ENCODE measurements at regions of chr1 and their contacts with region 1.

Region 1: DNA sequence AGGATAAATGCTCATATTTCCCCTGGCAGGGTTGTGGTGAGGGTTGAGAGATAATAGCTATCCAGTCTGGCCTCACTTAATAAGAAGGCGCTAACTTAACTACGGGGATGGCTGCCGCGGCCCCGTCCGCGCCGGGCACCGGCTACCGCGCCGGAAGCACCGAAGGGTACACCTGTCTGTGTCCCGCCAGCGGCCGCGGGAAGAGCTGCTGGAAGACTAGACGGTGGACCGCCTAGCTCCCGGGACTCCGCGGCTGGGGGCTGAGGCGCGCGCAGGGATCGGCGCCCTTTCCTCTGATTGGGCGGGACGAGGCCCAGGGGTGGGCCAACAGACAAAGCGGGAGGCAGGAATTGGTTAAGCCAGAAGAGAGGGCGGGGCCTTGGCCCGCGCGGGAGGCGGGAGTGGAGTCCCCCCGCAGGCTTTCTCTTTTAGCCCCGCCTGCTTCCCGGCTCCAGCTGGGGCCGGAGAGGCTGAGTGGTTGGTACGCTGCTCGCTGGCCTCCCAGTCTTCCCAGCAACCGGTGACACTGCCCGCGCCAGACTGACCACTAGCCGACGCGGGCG is at the start of gene ZNF672:
- DNase-seq: peak; percentile 94
- ATAC-seq: peak; percentile 82
- H3K4me3 ChIP-seq: peak within 1 kb of the TSS; percentile 65 to 94 (median 92)
- H3K4me3 Mint-ChIP-seq: no peak within 1 kb of the TSS
- H3K27ac ChIP-seq: peak within 1 kb of the TSS; percentile 97 to 99
- H3K27ac Mint-ChIP-seq: no peak within 1 kb of the TSS
- H3K4me1 ChIP-seq: peaks cover 42 to 47% of the 10 kb centered on the region in 2 donors
- H3K4me1 Mint-ChIP-seq: peaks cover 36% of the 10 kb centered on the region
- H3K27me3 ChIP-seq: no peaks in the 10 kb centered on the region
- H3K27me3 Mint-ChIP-seq: no peaks in the 10 kb centered on the region
- CTCF ChIP-seq: no peak
- total RNA-seq, gene ZNF672: 56.3 and 62.2 TPM in 2 replicates

Region 2: GRCh38 chr1:248786156-248786555 is 51.7 kb before region 1 on chr1:
- CTCF ChIA-PET with region 1: no interaction called
- POLR2A ChIA-PET with region 1: no interaction called
- intact Hi-C with region 1: no loop called
- DNase-seq: no peak
- ATAC-seq: peak; percentile 31
- H3K4me3 ChIP-seq: no peak overlapping the region
- H3K4me3 Mint-ChIP-seq: peak overlapping the region; percentile 26
- H3K27ac ChIP-seq: peak overlapping the region in 1 of 2 donors; percentile 55
- H3K27ac Mint-ChIP-seq: peak overlapping the region; percentile 72
- H3K4me1 ChIP-seq: peaks cover 43 to 46% of the 10 kb centered on the region in 2 donors
- H3K4me1 Mint-ChIP-seq: peaks cover 40% of the 10 kb centered on the region
- H3K27me3 ChIP-seq: no peaks in the 10 kb centered on the region
- H3K27me3 Mint-ChIP-seq: no peaks in the 10 kb centered on the region
- CTCF ChIP-seq: no peak

Region 3: GRCh38 chr1:248815407-248816015 is 22.4 kb before region 1 on chr1:
- CTCF ChIA-PET with region 1: no interaction called
- POLR2A ChIA-PET with region 1: no interaction called
- intact Hi-C with region 1: no loop called
- DNase-seq: no peak
- ATAC-seq: no peak
- H3K4me3 ChIP-seq: no peak overlapping the region
- H3K4me3 Mint-ChIP-seq: no peak overlapping the region
- H3K27ac ChIP-seq: no peak overlapping the region
- H3K27ac Mint-ChIP-seq: no peak overlapping the region
- H3K4me1 ChIP-seq: peaks cover 48 to 53% of the 10 kb centered on the region in 2 donors
- H3K4me1 Mint-ChIP-seq: peaks cover 42% of the 10 kb centered on the region
- H3K27me3 ChIP-seq: no peaks in the 10 kb centered on the region
- H3K27me3 Mint-ChIP-seq: no peaks in the 10 kb centered on the region
- CTCF ChIP-seq: no peak

Region 4: DNA sequence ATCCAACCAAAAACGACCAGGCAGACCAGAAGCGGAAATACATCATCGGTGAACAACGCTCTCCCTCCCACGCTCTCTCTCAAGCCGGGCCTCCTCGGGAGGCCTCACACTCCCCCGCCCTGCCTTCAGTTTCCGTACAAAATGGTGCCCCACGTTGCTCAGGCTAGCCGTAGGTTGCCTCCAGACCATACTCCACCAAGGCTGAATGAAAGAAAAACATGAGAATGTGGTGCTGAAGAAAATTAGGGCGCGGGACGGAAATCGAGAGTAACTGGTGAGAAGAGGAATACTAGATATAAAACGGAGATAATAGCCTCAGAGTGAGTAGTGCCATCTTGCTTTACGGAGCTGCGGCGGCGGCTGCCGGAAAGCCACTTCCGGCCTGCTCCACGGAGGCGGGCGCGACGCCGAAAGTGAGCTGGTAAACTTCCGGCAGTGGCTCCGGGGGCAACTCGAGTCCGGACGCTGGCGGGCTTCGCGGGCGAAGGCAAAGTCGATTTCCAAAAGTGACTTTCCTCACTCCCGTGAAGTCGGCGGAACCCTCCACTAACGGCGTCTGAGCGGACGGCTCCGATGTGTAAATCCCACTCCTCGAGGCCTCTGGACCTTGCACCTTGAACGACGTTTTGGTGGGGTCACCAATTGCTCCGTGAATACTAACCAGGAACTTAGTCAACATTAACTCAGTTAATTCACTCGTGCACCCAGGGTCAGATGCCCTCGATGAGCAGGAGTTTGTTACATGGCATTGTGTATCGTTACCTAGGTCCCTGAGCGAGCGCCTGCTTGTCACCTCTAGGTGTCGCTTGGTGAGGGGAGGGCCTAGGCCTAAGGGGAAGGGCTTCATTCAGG is 11.7 kb before region 1 on chr1 and contains the start of gene SH3BP5L:
- CTCF ChIA-PET with region 1: interaction called, 43 read pairs
- POLR2A ChIA-PET with region 1: interaction called, 51 read pairs
- intact Hi-C with region 1: loop called (anchors 1 kb)
- DNase-seq: peak; percentile 98
- ATAC-seq: peak; percentile 84
- H3K4me3 ChIP-seq: peak within 1 kb of the TSS; percentile 86 to 99 (median 93)
- H3K4me3 Mint-ChIP-seq: peak within 1 kb of the TSS; percentile 95
- H3K27ac ChIP-seq: peak within 1 kb of the TSS; percentile 98
- H3K27ac Mint-ChIP-seq: peak within 1 kb of the TSS; percentile 96
- H3K4me1 ChIP-seq: peaks cover 52 to 54% of the 10 kb centered on the region in 2 donors
- H3K4me1 Mint-ChIP-seq: peaks cover 57% of the 10 kb centered on the region
- H3K27me3 ChIP-seq: no peaks in the 10 kb centered on the region
- H3K27me3 Mint-ChIP-seq: no peaks in the 10 kb centered on the region
- CTCF ChIP-seq: peak; percentile 84
- total RNA-seq, gene SH3BP5L: 35.7 and 36.5 TPM in 2 replicates

Region 5: DNA sequence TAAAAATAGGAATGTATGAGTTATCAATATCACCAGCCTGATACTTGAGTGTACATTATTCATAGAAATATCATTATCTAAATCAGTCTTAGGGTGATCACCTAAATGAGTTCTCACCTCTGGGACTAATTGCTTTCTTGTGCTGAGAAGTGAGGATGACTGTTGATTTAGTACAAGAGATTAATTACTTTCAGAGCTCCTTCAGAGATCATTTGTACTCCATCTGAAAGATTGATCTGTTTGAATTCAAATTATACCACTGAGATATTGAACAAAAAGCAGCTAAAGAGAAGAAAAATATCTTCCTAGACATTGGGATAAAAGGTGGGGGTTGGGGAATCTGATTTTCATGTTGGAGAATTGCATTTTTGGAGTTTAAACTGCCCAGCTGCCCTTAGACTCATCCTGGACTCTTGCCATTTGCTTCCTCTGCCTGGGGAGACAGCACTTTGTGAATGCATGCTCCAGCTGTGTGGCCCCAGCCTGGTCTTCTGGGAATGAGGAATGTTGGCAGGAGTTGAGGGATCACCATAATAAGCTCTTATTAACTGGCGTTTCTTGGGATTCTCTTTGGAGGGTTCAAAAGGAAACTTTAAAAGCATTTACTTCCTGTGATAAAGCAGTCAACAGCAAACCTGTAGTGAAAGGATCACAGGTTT is 48.5 kb after region 1 on chr1:
- CTCF ChIA-PET with region 1: no interaction called
- POLR2A ChIA-PET with region 1: no interaction called
- intact Hi-C with region 1: no loop called
- DNase-seq: no peak
- ATAC-seq: no peak
- H3K4me3 ChIP-seq: no peak overlapping the region
- H3K4me3 Mint-ChIP-seq: no peak overlapping the region
- H3K27ac ChIP-seq: no peak overlapping the region
- H3K27ac Mint-ChIP-seq: no peak overlapping the region
- H3K4me1 ChIP-seq: peaks cover 11 to 15% of the 10 kb centered on the region in 2 donors
- H3K4me1 Mint-ChIP-seq: peaks cover 22% of the 10 kb centered on the region
- H3K27me3 ChIP-seq: no peaks in the 10 kb centered on the region
- H3K27me3 Mint-ChIP-seq: peaks cover 10% of the 10 kb centered on the region
- CTCF ChIP-seq: no peak

Region 6: DNA sequence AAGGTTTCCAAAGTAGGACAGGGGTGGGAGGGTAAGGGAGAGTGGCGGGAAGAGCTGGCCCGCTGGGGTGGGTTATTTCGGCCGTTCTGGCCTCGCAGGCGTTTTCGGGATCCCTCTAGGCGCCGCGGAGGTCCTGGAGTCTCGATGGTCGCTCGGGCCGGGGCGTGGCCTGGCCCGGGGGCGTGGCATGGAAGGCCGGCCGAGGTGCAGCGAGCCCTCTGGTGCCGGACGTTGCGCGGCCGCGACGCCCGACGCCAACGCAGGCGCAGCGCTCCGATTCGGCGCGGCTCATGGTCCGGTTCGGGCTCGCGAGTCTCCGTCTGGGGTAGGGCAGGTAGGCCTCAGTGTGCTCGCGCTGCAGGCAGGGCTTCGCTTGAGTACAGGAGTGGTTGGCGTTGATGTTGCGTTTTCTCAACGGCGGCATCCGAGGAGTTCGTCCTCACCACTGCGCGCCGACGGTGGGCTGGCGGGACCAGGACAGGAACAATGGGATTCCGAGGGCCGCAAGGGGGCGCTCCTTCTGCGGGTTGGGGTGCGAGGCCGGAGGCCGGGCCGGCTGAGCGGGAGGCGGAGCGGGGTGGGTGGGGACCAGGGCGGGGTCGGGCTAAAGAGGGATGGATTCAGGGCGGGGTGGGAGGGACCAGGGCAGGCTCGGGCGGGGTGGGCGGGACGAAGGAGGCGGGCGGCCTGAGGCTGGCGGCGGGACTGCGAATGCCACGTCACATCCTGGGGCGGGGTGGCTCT is 68.3 kb after region 1 on chr1 and contains the start of gene PGBD2:
- CTCF ChIA-PET with region 1: interaction called, 3 read pairs
- POLR2A ChIA-PET with region 1: interaction called, 7 read pairs
- intact Hi-C with region 1: loop called (anchors 1 kb)
- DNase-seq: peak; percentile 96
- ATAC-seq: peak; percentile 84
- H3K4me3 ChIP-seq: peak within 1 kb of the TSS; percentile 69 to 84 (median 71)
- H3K4me3 Mint-ChIP-seq: peak within 1 kb of the TSS; percentile 94
- H3K27ac ChIP-seq: peak within 1 kb of the TSS; percentile 78 to 94
- H3K27ac Mint-ChIP-seq: peak within 1 kb of the TSS; percentile 97
- H3K4me1 ChIP-seq: peaks cover 15 to 20% of the 10 kb centered on the region in 2 donors
- H3K4me1 Mint-ChIP-seq: peaks cover 47% of the 10 kb centered on the region
- H3K27me3 ChIP-seq: no peaks in the 10 kb centered on the region
- H3K27me3 Mint-ChIP-seq: no peaks in the 10 kb centered on the region
- CTCF ChIP-seq: peak; percentile 66
- total RNA-seq, gene PGBD2: 27.7 and 29.2 TPM in 2 replicates